Activated CD8-positive, alpha-beta memory T cell treated with anti-CD3 and anti-CD28 coated beads, Interleukin-2, amount 10 ng/mL, durations not matched to agents 7 days and 5 days (primary cell): ENCODE measurements at regions of chr2 and their contacts with region 1.

Region 1: GRCh38 chr2:96116879-96117697 is 717 bp upstream of the ADRA2B start:
- DNase-seq: peak; percentile 63
- ATAC-seq: peak; percentile 85
- H3K4me3 Mint-ChIP-seq: peak overlapping the region; percentile 32
- H3K27ac Mint-ChIP-seq: no peak overlapping the region
- H3K4me1 Mint-ChIP-seq: peaks cover 27% of the 10 kb centered on the region
- H3K27me3 Mint-ChIP-seq: peaks cover 34% of the 10 kb centered on the region

Region 2: GRCh38 chr2:96024336-96025193 is 92.5 kb before region 1 on chr2:
- CTCF ChIA-PET with region 1: interaction called, 44 read pairs
- DNase-seq: no peak
- ATAC-seq: no peak
- H3K4me3 Mint-ChIP-seq: no peak overlapping the region
- H3K27ac Mint-ChIP-seq: no peak overlapping the region
- H3K4me1 Mint-ChIP-seq: peaks cover 2% of the 10 kb centered on the region
- H3K27me3 Mint-ChIP-seq: no peaks in the 10 kb centered on the region

Region 3: GRCh38 chr2:96131152-96131812 is 14.2 kb after region 1 on chr2:
- CTCF ChIA-PET with region 1: interaction called, 17 read pairs
- DNase-seq: peak; percentile 71
- ATAC-seq: peak; percentile 59
- H3K4me3 Mint-ChIP-seq: no peak overlapping the region
- H3K27ac Mint-ChIP-seq: peak overlapping the region; percentile 77
- H3K4me1 Mint-ChIP-seq: peaks cover 32% of the 10 kb centered on the region
- H3K27me3 Mint-ChIP-seq: no peaks in the 10 kb centered on the region

Region 4: DNA sequence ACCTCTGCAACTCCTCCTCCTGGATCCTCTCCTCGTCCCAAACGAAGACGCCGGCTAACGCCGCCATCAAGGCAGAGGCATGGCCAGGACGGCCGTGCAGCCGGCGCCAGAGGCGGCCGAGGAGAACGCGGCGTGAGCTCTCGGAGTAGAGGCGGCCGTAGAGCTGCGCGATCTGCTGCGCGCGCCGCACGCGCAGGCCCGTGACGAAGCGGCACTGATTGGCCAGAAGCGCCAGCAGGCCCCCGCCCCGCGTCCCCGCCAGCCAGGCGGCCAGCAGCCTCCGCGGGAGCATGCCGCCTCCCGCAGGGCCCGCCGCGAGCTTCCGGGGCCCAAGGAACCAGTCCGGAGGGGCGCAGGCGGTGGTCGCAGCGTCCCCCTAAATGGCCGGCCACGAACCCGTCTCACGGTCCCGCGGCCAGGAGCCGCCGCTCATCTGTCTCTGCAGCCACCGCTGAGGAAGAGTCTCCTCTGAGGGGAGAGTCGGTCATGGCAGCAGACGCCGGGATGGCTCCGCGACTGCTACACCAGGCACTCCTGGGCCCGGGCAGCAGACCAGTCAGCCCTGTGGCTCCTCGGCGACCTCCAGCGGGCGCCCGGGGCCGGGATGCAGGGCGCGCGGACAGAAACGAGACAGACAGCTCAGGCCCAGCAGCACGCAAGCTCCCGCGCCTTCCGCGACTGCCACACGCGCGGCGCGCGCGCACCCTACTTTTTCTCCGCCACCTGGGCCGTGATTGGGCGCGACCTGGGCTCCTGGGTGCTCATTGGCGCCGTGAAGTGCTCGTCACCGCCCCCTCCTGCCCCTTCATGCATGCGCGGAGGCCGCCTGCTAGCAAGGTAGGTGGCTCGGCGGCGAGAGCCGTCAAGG is 91.3 kb after region 1 on chr2 and contains the start of gene STARD7:
- CTCF ChIA-PET with region 1: interaction called, 10 read pairs
- DNase-seq: peak; percentile 98
- ATAC-seq: peak; percentile 92
- H3K4me3 Mint-ChIP-seq: peak within 1 kb of the TSS; percentile 88
- H3K27ac Mint-ChIP-seq: peak within 1 kb of the TSS; percentile 88
- H3K4me1 Mint-ChIP-seq: peaks cover 49% of the 10 kb centered on the region
- H3K27me3 Mint-ChIP-seq: no peaks in the 10 kb centered on the region
- total RNA-seq, gene STARD7: 131 to 180 TPM

Region 5: GRCh38 chr2:96359310-96359709 is 242.2 kb after region 1 on chr2:
- CTCF ChIA-PET with region 1: no interaction called
- DNase-seq: peak; percentile 59
- ATAC-seq: peak; percentile 48
- H3K4me3 Mint-ChIP-seq: no peak overlapping the region
- H3K27ac Mint-ChIP-seq: no peak overlapping the region
- H3K4me1 Mint-ChIP-seq: peaks cover 20% of the 10 kb centered on the region
- H3K27me3 Mint-ChIP-seq: no peaks in the 10 kb centered on the region